ENCODE measurements at regions of chr2 and their contacts with region 1.

Region 1: GRCh38 chr2:62042400-62042799 is 136.9 kb downstream of the COMMD1 start:
- DNase-seq: no peak
- ATAC-seq: no peak
- H3K4me3 ChIP-seq: no peak overlapping the region
- H3K27ac ChIP-seq: no peak overlapping the region
- H3K4me1 ChIP-seq: no peaks in the 10 kb centered on the region
- H3K27me3 ChIP-seq: no peaks in the 10 kb centered on the region
- CTCF ChIP-seq: no peak

Region 2: DNA sequence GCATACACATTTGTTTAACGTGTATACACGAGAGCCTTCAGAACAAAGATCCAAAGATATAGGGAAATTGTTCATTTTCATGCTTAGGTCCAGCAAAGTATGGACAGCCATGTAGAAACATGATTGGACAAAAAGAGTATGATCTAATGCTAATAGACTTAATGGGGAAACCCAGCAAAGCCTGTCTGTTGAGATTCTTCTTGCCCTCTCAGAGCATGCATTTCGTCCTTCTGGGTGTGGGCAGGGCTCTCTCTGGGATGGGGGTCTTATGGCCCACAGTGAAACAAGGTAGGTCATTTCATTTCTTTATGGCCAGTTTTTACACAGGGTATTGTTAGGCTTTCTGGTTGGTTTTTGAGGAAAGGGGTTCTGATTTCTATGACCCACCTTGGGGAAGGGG is 12.5 kb before region 1 on chr2:
- CTCF ChIA-PET with region 1: no interaction called
- POLR2A ChIA-PET with region 1: no interaction called
- in situ Hi-C with region 1: no loop called
- intact Hi-C with region 1: no loop called
- DNase-seq: no peak
- ATAC-seq: no peak
- H3K4me3 ChIP-seq: no peak overlapping the region
- H3K27ac ChIP-seq: no peak overlapping the region
- H3K4me1 ChIP-seq: no peaks in the 10 kb centered on the region
- H3K27me3 ChIP-seq: no peaks in the 10 kb centered on the region
- CTCF ChIP-seq: no peak

Region 3: DNA sequence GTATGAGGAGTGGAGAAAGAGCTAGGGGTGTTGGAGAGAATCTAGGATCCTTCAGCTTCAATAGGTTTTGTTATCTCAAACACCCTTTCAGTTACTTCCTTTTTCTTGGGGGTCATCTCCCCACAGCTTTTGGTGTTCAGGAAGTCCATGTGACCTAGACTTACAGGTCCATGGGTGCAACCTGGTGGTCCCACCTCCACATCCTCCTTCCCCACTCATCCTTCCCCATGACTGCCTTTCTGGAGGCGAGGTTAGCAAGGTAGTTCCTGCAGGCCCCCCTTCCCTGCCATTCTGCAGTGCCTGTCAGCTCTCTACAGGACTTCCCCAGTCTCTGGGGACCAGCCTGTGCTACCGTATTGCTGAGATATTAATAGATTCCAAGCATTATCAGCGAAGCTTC is 356.0 kb after region 1 on chr2:
- CTCF ChIA-PET with region 1: no interaction called
- POLR2A ChIA-PET with region 1: interaction called, 11 read pairs
- in situ Hi-C with region 1: no loop called
- intact Hi-C with region 1: no loop called
- DNase-seq: no peak
- ATAC-seq: no peak
- H3K4me3 ChIP-seq: no peak overlapping the region
- H3K27ac ChIP-seq: no peak overlapping the region
- H3K4me1 ChIP-seq: no peaks in the 10 kb centered on the region
- H3K27me3 ChIP-seq: no peaks in the 10 kb centered on the region
- CTCF ChIP-seq: no peak